ENCODE measurements at regions of chr19 and their contacts with region 1.

Region 1: DNA sequence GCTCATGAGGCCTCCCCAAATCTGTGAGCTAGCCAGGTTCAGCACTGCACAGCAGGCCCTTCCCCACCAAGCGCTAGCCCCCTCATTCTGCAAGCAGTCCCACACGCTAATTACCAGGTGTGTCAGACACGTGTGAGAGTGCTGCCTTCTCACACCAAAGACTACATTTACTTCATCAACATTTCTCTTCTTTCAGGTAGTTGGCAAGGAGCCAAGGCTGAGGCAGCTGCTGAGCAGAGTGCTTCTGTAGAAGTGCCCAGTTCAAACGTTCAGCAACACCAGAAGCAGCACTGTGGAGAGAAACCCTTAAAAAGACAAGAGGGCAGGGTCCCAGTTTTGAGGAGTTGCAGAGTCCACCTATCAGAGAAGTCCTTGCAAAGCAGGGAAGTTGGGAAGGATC is 6.4 kb downstream of the ZNF773 start:
- DNase-seq: no peak
- ATAC-seq: no peak
- H3K4me3 ChIP-seq: no peak overlapping the region
- H3K27ac ChIP-seq: no peak overlapping the region
- H3K4me1 ChIP-seq: no peaks in the 10 kb centered on the region
- H3K27me3 ChIP-seq: no peaks in the 10 kb centered on the region

Region 2: GRCh38 chr19:56765137-56765536 is 741.0 kb before region 1 on chr19:
- intact Hi-C with region 1: loop called in 1 of 4 experiments (anchors 10 kb)
- DNase-seq: peak; percentile 74 to 88 (median 87)
- ATAC-seq: peak; percentile 90 to 92
- H3K4me3 ChIP-seq: peak overlapping the region; percentile 40
- H3K27ac ChIP-seq: no peak overlapping the region
- H3K4me1 ChIP-seq: no peaks in the 10 kb centered on the region
- H3K27me3 ChIP-seq: no peaks in the 10 kb centered on the region

Region 3: DNA sequence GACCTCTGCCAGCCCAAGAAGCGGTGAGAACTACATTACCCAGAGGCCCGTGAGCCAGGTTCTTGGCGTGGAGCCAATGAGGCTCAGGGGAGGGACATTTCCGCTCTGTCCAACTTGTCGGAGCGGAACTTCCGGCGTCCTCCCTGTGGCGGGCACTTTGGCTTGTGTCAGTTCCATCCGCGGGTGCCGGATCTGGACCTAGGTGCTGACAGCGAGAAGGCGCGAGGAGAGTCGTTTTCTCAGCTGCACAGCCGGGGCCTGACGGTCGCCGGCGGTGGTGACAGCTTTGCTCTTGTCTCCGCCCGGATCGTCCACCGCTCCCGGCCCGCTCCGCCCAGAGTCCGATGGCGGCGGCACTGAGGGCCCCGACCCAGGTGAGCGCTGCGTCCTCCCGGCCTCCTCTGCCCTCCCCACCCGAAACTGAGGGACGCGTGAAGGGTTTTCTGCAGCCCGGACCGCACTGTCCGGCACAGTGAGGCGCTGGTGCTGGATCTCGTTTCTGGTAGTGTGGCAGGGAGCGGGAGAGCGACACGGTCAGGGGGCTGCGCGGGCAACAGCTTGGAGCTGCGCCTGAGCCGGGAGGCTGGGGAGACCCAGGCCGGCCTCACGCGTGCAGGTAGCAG is 93.7 kb after region 1 on chr19 and contains the start of gene ZNF530:
- intact Hi-C with region 1: no loop called
- DNase-seq: peak; percentile 96 to 98 (median 97)
- ATAC-seq: peak; percentile 99
- H3K4me3 ChIP-seq: peak within 1 kb of the TSS; percentile 81
- H3K27ac ChIP-seq: peak within 1 kb of the TSS; percentile 70
- H3K4me1 ChIP-seq: peaks cover 2% of the 10 kb centered on the region
- H3K27me3 ChIP-seq: no peaks in the 10 kb centered on the region
- total RNA-seq, gene ZNF530: 3.7 to 5.9 (median 5.0) TPM

Region 4: DNA sequence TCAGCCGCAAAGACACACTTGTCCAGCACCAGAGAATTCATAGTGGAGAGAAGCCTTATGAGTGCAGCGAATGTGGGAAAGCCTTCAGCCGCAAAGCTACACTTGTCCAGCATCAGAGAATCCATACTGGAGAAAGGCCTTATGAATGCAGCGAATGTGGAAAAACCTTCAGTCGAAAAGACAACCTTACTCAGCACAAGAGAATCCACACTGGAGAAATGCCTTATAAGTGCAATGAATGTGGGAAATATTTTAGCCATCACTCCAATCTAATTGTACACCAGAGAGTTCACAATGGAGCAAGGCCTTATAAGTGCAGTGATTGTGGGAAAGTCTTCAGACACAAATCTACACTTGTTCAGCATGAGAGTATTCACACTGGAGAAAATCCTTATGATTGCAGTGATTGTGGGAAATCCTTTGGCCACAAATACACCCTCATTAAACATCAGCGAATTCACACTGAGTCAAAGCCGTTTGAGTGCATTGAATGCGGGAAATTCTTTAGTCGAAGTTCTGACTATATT is 114.6 kb after region 1 on chr19:
- intact Hi-C with region 1: no loop called
- DNase-seq: no peak
- ATAC-seq: no peak
- H3K4me3 ChIP-seq: peak overlapping the region; percentile 31
- H3K27ac ChIP-seq: no peak overlapping the region
- H3K4me1 ChIP-seq: no peaks in the 10 kb centered on the region
- H3K27me3 ChIP-seq: no peaks in the 10 kb centered on the region

Measured in right cardiac atrium (tissue), 5 donors.